GM10248 (cell line): ENCODE measurements at regions of chr2 and their contacts with region 1.

Region 1: GRCh38 chr2:134411828-134412638 is 158.2 kb downstream of the MGAT5 start:
- DNase-seq: peak; percentile 78
- CTCF ChIP-seq: peak; percentile 82

Region 2: DNA sequence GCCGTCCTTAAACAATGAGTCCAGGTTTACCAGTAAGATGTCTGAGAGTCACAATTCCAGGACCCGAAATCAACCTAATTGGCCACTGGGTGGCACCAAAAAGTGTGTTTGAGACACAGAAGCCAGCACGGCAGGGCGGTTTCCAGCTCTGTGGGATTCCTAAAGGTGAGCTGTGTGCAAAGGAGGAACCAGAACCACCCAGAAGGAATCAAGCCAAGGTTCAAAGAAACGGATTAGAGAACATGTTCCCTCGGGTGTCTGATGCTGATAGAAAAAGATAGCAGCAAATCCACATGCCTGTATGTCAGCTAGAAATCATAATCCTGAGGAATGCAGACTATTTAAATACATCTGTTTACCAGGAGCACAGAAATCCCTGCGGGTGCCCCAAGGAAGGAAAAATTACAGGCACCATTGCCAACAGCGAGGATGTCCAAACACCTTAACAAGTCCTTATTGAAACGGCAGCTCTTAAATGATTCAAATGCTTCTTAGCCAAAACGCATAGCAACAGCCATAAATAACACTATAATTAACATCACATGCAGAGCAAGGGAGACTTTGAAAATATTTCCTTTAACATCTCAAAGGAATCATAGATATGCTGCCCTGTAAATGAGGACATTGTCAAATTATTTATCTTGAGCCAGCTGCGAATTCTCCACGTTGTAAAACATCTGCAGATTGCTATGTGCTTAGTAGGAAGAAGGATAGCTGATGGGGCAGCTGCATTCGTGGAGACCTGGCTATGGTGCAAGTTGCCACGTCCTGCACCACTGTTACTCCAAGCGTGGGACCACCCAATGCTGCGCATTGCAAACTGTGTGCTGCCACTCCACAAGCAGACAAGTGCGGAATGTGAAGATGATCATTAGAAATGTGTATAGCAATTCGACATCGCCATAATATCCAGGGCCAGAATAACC is 525.0 kb before region 1 on chr2:
- CTCF ChIA-PET with region 1: interaction called, 67 read pairs
- POLR2A ChIA-PET with region 1: no interaction called
- DNase-seq: peak; percentile 69
- CTCF ChIP-seq: peak; percentile 68

Region 3: DNA sequence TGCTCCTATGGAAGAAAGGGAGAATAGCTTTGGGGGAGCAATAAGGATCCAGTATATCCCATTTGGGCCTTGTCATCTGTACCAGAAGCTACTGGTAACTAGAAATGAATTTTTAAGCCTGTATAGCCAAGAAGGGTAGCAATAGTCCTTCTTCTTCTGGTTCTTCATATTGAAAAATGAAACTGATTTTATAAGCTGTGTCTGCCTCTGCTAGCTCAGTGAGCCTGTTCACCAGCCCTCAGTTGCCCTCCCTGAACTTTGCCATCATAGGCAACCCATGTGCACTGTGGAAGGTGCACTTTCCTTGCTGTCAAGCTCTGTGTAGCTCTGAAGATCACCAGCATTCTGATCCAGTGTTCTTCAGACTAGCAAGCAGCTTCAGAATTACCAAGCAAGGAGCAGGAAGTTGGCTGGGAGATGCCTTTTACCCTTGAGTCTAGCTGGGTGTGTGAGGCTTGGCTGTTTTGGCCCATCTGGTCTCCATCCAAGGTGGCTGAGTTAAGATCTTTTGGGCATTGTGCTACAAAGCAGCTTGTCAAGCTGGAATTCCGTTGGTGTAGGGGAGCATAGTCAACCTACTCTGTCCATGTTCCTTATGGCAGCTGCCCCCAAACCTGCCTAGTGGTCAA is 213.9 kb before region 1 on chr2:
- CTCF ChIA-PET with region 1: interaction called, 10 read pairs
- POLR2A ChIA-PET with region 1: no interaction called
- DNase-seq: no peak
- CTCF ChIP-seq: no peak

Region 4: GRCh38 chr2:134245340-134245984 is 166.6 kb before region 1 on chr2:
- CTCF ChIA-PET with region 1: interaction called, 27 read pairs
- POLR2A ChIA-PET with region 1: no interaction called
- DNase-seq: no peak
- CTCF ChIP-seq: peak; percentile 72

Region 5: DNA sequence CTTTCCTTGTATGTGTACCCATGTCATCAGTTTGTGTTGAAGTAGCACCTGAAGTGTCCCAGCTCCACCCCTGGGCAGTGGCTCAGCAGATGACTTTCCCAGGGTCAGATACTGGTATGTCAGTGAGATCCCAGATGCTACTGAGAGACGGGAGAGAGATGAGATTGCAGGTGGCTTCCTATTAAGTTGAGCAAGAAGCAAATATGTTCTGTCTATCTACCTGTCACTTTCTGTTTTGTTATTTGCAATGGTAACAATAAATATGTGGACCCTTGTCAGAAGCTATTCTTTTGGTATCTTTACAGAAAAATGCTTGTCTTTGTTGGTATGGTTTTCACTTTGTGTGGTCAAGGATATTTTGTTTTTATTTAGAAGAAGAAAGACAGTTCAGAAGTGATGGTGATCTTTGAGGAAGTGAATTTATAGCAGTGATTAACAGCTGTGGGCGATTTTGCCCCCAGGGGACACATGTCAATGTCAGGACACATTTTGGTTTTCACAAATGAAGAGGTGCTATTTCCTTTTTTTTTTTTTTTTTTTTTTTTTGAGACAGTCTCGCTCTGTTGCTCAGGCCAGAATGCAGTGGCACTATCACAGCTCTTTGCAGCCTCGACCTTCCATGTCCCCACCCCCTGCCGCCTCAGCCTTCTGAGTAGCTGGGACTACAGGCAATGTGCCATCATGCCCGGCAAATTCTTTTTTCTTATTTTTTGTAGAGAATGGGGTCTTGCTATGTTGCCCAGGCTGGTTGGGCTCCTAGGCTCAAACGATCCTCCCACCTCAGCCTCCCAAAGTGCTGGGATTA is 136.8 kb before region 1 on chr2:
- CTCF ChIA-PET with region 1: interaction called, 10 read pairs
- POLR2A ChIA-PET with region 1: interaction called, 3 read pairs
- DNase-seq: peak; percentile 56
- CTCF ChIP-seq: no peak

Region 6: GRCh38 chr2:134391751-134392160 is 20.3 kb before region 1 on chr2:
- CTCF ChIA-PET with region 1: interaction called, 48 read pairs
- POLR2A ChIA-PET with region 1: no interaction called
- DNase-seq: peak; percentile 56
- CTCF ChIP-seq: no peak

Region 7: DNA sequence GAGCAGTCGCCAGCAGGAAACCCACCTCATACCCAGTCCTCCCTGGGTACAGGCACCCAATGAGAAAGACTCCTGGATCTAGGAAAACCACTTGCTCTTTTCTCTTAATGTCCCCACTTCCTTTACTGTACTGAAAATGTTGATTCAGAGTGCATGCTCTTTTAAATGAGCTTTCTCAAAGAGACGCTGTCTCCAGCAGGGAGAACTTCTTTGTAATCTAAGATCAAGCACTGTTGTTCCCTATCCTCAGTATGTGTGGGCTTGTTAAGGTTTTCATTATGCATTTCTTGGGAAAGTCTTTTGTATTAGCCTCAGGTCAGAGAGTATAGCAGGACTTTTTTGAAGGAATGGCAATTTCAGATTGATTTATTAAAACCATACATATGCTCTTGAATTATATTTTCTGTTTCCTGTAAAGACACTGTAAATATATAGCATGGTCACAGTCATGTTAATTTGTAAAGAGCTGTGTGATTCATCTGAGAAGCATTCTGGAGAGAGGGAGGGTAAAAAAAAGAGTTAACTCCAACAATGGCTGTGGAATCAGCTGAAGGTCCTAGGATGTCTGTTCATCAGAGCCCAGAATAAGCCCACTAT is 19.9 kb after region 1 on chr2:
- CTCF ChIA-PET with region 1: interaction called, 43 read pairs
- POLR2A ChIA-PET with region 1: no interaction called
- DNase-seq: no peak
- CTCF ChIP-seq: no peak

Region 8: GRCh38 chr2:134512734-134513464 is 100.9 kb after region 1 on chr2:
- CTCF ChIA-PET with region 1: no interaction called
- POLR2A ChIA-PET with region 1: no interaction called
- DNase-seq: no peak
- CTCF ChIP-seq: no peak